ENCODE measurements at regions of chr7 and their contacts with region 1.

Region 1: DNA sequence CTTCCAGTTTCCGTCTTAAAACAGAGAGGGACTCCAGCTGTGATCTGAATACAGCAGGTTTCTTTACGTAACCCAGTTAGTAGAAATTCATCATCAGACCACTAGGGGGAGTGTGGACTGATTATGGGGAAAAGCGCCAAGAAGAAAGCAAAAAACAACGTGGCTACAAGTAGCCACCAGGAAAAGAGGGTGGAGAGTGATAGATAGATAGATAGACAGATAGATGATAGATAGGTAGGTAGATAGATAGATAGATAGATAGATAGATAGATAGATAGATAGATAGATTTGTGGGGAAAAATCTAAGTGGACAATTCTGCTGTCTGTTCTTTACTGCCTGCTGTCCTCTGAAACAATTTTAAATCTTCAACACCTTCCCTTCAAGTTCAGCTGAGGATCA is 12.7 kb upstream of the AKR1B10 start:
- DNase-seq: peak; percentile 13
- ATAC-seq: peak; percentile 84
- H3K4me3 ChIP-seq: no peak overlapping the region
- H3K27ac ChIP-seq: no peak overlapping the region
- H3K4me1 ChIP-seq: no peaks in the 10 kb centered on the region
- H3K27me3 ChIP-seq: no peaks in the 10 kb centered on the region; a peak in 1 of 4 replicates
- CTCF ChIP-seq: peak; percentile 63 to 76 (median 73)
- EP300 ChIP-seq: no peak
- POLR2A ChIP-seq: no peak
- RAD21 ChIP-seq: peak; percentile 69

Region 2: GRCh38 chr7:134470864-134471263 is 43.8 kb before region 1 on chr7:
- CTCF ChIA-PET with region 1: no interaction called
- POLR2A ChIA-PET with region 1: no interaction called
- RAD21 ChIA-PET with region 1: no interaction called
- SMC1A ChIA-PET with region 1: no interaction called
- in situ Hi-C with region 1: no loop called
- intact Hi-C with region 1: no loop called
- DNase-seq: no peak
- ATAC-seq: no peak
- H3K4me3 ChIP-seq: no peak overlapping the region
- H3K27ac ChIP-seq: no peak overlapping the region
- H3K4me1 ChIP-seq: no peaks in the 10 kb centered on the region
- H3K27me3 ChIP-seq: no peaks in the 10 kb centered on the region
- CTCF ChIP-seq: no peak
- EP300 ChIP-seq: no peak
- POLR2A ChIP-seq: no peak
- RAD21 ChIP-seq: no peak

Region 3: DNA sequence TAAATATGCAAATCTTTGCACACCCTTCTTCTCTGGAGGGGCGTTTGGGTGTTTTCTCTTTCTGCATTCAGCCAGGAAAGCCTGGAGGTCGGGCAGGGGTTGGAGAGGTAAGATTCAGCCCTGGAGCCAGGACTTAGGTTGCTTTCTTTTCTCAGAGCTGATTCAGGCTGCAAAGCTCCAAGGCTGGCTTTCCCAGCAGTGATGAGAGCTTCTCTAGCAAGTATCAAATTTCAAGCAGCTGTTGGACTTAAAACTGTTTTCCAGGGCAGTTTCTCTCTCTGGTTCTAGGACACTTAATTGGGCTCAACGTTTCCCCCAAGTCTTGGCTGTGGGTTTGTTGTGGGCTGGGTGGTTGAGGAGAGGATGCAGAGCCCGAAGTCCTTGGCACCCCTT is 13.3 kb after region 1 on chr7:
- CTCF ChIA-PET with region 1: interaction called, 11 read pairs
- POLR2A ChIA-PET with region 1: no interaction called
- RAD21 ChIA-PET with region 1: no interaction called
- SMC1A ChIA-PET with region 1: interaction called, 3 read pairs
- in situ Hi-C with region 1: no loop called
- intact Hi-C with region 1: no loop called
- DNase-seq: no peak
- ATAC-seq: no peak
- H3K4me3 ChIP-seq: no peak overlapping the region
- H3K27ac ChIP-seq: no peak overlapping the region
- H3K4me1 ChIP-seq: no peaks in the 10 kb centered on the region
- H3K27me3 ChIP-seq: peaks cover 2 to 4% of the 10 kb centered on the region in 2 experiments; a peak in 2 of 4 replicates
- CTCF ChIP-seq: no peak
- EP300 ChIP-seq: no peak
- POLR2A ChIP-seq: no peak
- RAD21 ChIP-seq: no peak

Region 4: GRCh38 chr7:134547397-134548054 is 32.9 kb after region 1 on chr7:
- CTCF ChIA-PET with region 1: interaction called, 22 read pairs
- POLR2A ChIA-PET with region 1: no interaction called
- RAD21 ChIA-PET with region 1: interaction called, 9 read pairs
- SMC1A ChIA-PET with region 1: interaction called, 10 read pairs
- in situ Hi-C with region 1: no loop called
- intact Hi-C with region 1: loop called (anchors 5 kb)
- DNase-seq: peak; percentile 39
- ATAC-seq: peak; percentile 87
- H3K4me3 ChIP-seq: no peak overlapping the region; the same call in 1 of the 2 replicates
- H3K27ac ChIP-seq: no peak overlapping the region
- H3K4me1 ChIP-seq: peaks cover 21% of the 10 kb centered on the region
- H3K27me3 ChIP-seq: no peaks in the 10 kb centered on the region
- CTCF ChIP-seq: peak; percentile 72 to 87 (median 74)
- EP300 ChIP-seq: no peak
- POLR2A ChIP-seq: no peak
- RAD21 ChIP-seq: peak; percentile 34; the same call in 1 of the 2 replicates

Region 5: DNA sequence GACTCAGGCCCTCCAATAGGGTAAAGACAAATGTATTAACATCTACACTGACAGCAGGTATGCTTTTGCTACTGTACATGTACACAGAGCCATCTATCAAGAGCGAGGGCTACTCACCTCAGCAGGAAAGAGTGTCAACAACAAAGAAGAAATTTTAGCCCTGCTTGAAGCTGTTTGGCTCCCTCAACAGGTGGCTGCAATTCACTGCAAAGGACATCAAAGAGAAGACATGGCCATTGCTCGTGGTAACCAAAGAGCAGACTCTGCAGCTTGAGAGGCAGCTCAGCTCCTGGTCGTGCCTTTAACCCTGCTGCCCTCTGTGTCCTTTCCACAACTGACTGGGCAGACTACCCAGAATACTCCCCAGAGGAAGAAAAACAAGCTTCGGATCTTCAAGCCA is 39.3 kb after region 1 on chr7:
- CTCF ChIA-PET with region 1: interaction called, 22 read pairs
- POLR2A ChIA-PET with region 1: no interaction called
- RAD21 ChIA-PET with region 1: interaction called, 9 read pairs
- SMC1A ChIA-PET with region 1: interaction called, 10 read pairs
- in situ Hi-C with region 1: no loop called
- intact Hi-C with region 1: loop called (anchors 5 kb)
- DNase-seq: no peak
- ATAC-seq: peak; percentile 54
- H3K4me3 ChIP-seq: no peak overlapping the region
- H3K27ac ChIP-seq: no peak overlapping the region
- H3K4me1 ChIP-seq: peaks cover 12% of the 10 kb centered on the region
- H3K27me3 ChIP-seq: no peaks in the 10 kb centered on the region
- CTCF ChIP-seq: peak; percentile 36 to 43 (median 38); a peak in 3 of 6 replicates
- EP300 ChIP-seq: no peak
- POLR2A ChIP-seq: no peak
- RAD21 ChIP-seq: peak; percentile 61

Region 6: GRCh38 chr7:134589480-134589941 is 74.8 kb after region 1 on chr7:
- CTCF ChIA-PET with region 1: no interaction called
- POLR2A ChIA-PET with region 1: no interaction called
- RAD21 ChIA-PET with region 1: no interaction called
- SMC1A ChIA-PET with region 1: no interaction called
- in situ Hi-C with region 1: no loop called
- intact Hi-C with region 1: no loop called
- DNase-seq: no peak
- ATAC-seq: no peak
- H3K4me3 ChIP-seq: no peak overlapping the region
- H3K27ac ChIP-seq: no peak overlapping the region
- H3K4me1 ChIP-seq: no peaks in the 10 kb centered on the region
- H3K27me3 ChIP-seq: no peaks in the 10 kb centered on the region
- CTCF ChIP-seq: no peak
- EP300 ChIP-seq: no peak
- POLR2A ChIP-seq: no peak
- RAD21 ChIP-seq: no peak

Region 7: GRCh38 chr7:134605973-134606923 is 91.6 kb after region 1 on chr7:
- CTCF ChIA-PET with region 1: interaction called, 68 read pairs
- POLR2A ChIA-PET with region 1: no interaction called
- RAD21 ChIA-PET with region 1: interaction called, 10 read pairs
- SMC1A ChIA-PET with region 1: interaction called, 11 read pairs
- in situ Hi-C with region 1: loop called (anchors 5 kb)
- intact Hi-C with region 1: loop called (anchors 1 kb)
- DNase-seq: no peak
- ATAC-seq: peak; percentile 99
- H3K4me3 ChIP-seq: no peak overlapping the region
- H3K27ac ChIP-seq: no peak overlapping the region
- H3K4me1 ChIP-seq: no peaks in the 10 kb centered on the region
- H3K27me3 ChIP-seq: no peaks in the 10 kb centered on the region
- CTCF ChIP-seq: peak; percentile 86 to 91 (median 88)
- EP300 ChIP-seq: no peak
- POLR2A ChIP-seq: no peak
- RAD21 ChIP-seq: peak; percentile 92

Region 8: DNA sequence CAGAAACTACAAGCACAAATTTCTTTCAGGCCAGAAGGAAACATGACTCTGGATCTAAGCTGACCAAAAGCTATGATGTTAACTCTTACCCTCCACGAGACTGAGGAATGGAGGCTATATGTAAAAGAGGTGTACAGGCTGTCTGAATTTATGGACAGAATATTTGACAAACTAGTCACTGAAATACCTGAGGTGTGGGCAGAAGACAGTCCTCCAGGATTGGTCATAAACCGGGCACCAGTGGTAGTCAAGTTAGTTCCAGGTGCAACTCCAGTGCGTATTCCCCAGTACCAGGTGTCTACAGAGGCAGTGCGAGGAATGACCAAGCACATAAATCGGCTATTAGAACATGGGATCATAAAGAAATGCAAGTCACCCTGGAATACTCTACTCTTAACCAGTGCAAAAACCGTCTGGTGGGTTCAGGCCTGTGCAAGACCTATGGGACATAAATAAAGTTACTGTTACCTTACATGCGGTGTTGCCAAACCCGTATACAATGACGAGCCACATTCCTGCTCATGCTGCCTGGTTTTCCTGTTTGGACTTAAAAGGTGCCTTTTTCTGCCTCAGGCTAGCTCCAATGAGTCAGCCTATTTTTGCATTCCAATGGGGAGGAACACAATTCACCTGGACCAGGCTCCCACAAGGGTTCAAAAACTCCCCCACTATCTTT is 662.5 kb after region 1 on chr7:
- CTCF ChIA-PET with region 1: no interaction called
- POLR2A ChIA-PET with region 1: no interaction called
- RAD21 ChIA-PET with region 1: no interaction called
- SMC1A ChIA-PET with region 1: no interaction called
- in situ Hi-C with region 1: no loop called
- intact Hi-C with region 1: no loop called
- DNase-seq: no peak
- ATAC-seq: peak; percentile 3; the same call in 2 of the 3 replicates
- H3K4me3 ChIP-seq: 0 out of 2 replicates have a peak overlapping the region, but pooled peaks have one; percentile 51
- H3K27ac ChIP-seq: no peak overlapping the region
- H3K4me1 ChIP-seq: no peaks in the 10 kb centered on the region; the same call in 1 of the 2 replicates
- H3K27me3 ChIP-seq: no peaks in the 10 kb centered on the region
- CTCF ChIP-seq: no peak
- EP300 ChIP-seq: no peak
- POLR2A ChIP-seq: no peak
- RAD21 ChIP-seq: no peak

Measured in GM12878 (cell line).